ENCODE measurements at regions of chr6 and their contacts with region 1.

Region 1: GRCh38 chr6:34459899-34460593 is 5.8 kb upstream of the PACSIN1 start:
- DNase-seq: peak; percentile 36 to 62
- ATAC-seq: peak; percentile 69 to 76; a peak in 5 of 6 replicates
- H3K4me3 ChIP-seq: no peak overlapping the region
- H3K27ac ChIP-seq: no peak overlapping the region
- H3K4me1 ChIP-seq: peaks cover 10% of the 10 kb centered on the region
- CTCF ChIP-seq: peak; percentile 75
- EP300 ChIP-seq: no peak
- POLR2A ChIP-seq: no peak
- RAD21 ChIP-seq: peak; percentile 75 to 84

Region 2: DNA sequence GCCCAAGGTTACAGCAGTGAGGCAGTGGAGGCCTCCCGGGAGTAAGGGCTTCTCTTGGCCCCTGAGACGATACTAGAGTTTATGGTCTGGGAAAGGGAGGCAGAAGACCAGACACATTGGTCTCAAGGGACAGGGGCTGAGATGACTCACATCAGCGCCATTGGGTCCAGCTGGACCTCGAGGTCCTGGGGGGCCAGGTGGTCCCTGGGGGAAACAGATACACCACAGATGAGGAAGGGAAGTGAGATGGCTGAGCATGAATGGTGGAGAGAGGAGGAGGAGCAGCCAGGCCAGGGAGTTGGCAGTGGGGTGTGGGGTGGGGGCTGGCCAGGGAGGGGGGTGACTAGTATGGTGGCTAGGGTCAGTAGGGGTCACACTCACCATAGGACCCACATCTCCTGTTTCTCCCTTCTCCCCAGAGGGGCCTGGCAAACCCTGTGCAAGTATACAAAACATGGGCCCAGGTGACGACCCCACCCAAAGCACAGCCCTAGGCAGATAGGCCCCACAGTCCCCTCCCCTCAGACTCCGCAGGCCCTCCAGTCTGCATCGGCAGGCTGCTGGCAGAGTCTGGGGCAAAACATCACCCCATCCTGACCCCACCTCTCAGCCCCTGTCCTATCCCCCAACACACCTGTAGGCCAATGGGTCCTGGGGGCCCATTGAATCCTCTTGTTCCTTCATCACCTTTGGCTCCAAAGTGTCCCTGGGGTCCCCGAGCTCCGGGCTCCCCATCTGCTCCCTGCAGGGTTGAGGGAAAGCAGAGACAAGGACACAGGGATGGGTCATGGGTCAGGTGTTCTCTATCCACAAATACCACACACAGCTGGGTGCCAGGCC is 1289.7 kb before region 1 on chr6:
- CTCF ChIA-PET with region 1: no interaction called
- POLR2A ChIA-PET with region 1: no interaction called
- DNase-seq: no peak
- ATAC-seq: no peak
- H3K4me3 ChIP-seq: no peak overlapping the region
- H3K27ac ChIP-seq: no peak overlapping the region
- H3K4me1 ChIP-seq: no peaks in the 10 kb centered on the region
- CTCF ChIP-seq: no peak
- EP300 ChIP-seq: no peak
- POLR2A ChIP-seq: no peak
- RAD21 ChIP-seq: no peak

Region 3: GRCh38 chr6:34447910-34448309 is 12.1 kb before region 1 on chr6:
- CTCF ChIA-PET with region 1: interaction called, 14 read pairs
- POLR2A ChIA-PET with region 1: no interaction called
- DNase-seq: no peak
- ATAC-seq: 0 out of 6 replicates have a peak, but pooled peaks of 1 of the 2 experiments have one; percentile 43
- H3K4me3 ChIP-seq: no peak overlapping the region
- H3K27ac ChIP-seq: no peak overlapping the region
- H3K4me1 ChIP-seq: no peaks in the 10 kb centered on the region
- CTCF ChIP-seq: no peak
- EP300 ChIP-seq: no peak
- POLR2A ChIP-seq: no peak
- RAD21 ChIP-seq: no peak

Region 4: DNA sequence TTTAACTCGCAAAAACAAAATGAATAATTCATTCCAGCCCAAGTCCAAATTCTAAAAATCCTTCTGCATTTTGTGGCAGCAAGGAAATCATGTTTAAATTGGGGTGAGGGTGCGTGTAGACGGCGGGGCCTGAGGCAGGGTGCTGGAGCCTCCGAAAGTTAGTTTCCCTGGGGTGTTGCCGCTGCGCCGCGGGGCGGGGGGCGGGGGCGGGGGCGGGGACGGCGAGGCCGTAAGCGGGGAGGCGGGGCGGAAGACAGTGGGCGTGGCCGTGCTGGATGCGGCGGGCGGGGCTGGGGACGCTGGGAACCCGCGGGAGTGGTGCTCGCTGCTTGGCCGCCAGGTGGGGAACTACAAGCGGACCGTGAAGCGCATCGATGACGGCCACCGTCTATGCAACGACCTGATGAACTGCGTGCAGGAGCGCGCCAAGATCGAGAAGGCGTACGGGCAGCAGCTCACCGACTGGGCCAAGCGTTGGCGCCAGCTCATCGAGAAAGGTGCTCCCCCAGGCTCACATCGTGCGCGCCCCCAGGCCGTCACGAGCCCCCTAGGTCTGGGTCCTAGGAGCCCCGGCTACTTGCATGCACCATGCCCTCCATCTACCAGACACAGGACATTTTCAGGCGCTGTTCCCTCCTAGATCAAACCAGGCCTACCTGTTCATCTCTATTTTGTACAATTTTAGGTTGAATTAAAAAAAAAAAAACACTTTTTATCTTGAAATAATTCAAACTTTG is 67.1 kb after region 1 on chr6:
- CTCF ChIA-PET with region 1: interaction called, 10 read pairs
- POLR2A ChIA-PET with region 1: no interaction called
- DNase-seq: peak; percentile 85 to 91
- ATAC-seq: peak; percentile 86 to 95
- H3K4me3 ChIP-seq: peak overlapping the region; percentile 29; the same call in 1 of the 3 replicates
- H3K27ac ChIP-seq: peak overlapping the region; percentile 75 to 77
- H3K4me1 ChIP-seq: peaks cover 23% of the 10 kb centered on the region
- CTCF ChIP-seq: peak; percentile 54
- EP300 ChIP-seq: no peak
- POLR2A ChIP-seq: 0 out of 2 replicates have a peak, but pooled peaks have one; percentile 20
- RAD21 ChIP-seq: peak; percentile 56 to 75

Region 5: DNA sequence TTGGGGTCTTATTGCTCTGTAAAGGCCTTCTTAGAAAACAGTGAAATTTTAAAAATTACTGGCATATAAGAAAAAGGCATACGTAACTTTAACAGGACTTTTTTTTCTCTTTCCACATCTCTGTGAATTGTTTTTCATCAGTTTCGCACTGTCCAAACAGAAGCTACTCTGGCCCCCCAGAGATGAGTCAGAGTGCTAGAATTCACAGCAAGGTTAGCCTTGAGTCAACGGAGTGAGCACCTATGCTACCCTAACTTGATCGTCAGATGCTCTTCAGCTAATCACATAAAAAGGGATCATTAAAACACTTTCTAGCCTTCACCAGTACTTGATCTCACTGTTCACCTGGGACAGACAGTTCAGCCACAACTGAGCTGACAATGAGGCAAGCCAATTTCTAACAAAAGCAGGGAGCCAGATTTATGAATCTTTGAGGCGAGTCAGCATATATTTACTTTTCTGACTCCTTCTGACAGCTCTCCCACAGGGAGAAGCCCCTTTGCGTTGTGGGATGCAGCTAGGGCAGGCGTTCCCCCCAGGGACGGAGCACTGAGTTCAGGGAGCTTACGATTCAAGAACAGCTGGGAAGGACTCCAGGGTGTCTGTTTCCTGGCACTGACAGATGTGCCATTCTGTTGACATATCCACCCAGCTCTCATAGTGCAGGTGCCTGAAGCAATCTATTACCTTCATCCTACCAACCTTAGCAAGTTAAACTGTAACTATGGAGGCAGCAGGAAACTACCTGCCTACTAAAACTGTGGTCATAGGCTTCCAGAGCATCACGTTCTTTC is 142.5 kb after region 1 on chr6:
- CTCF ChIA-PET with region 1: interaction called, 20 read pairs
- POLR2A ChIA-PET with region 1: no interaction called
- DNase-seq: peak in 1 of 2 experiments; percentile 14
- ATAC-seq: peak; percentile 50 to 83; a peak in 4 of 6 replicates
- H3K4me3 ChIP-seq: no peak overlapping the region; the same call in 2 of the 3 replicates
- H3K27ac ChIP-seq: peak overlapping the region; percentile 16 to 55; a peak in 4 of 6 replicates
- H3K4me1 ChIP-seq: peaks cover 47% of the 10 kb centered on the region
- CTCF ChIP-seq: no peak
- EP300 ChIP-seq: no peak
- POLR2A ChIP-seq: no peak
- RAD21 ChIP-seq: no peak